GM12878 (cell line): ENCODE measurements at regions of chr3 and their contacts with region 1.

Region 1: GRCh38 chr3:14780927-14781507 is 37.7 kb upstream of the FGD5 start:
- DNase-seq: peak; percentile 31
- ATAC-seq: peak; percentile 100
- H3K4me3 ChIP-seq: no peak overlapping the region
- H3K27ac ChIP-seq: no peak overlapping the region
- H3K4me1 ChIP-seq: no peaks in the 10 kb centered on the region
- H3K27me3 ChIP-seq: no peaks in the 10 kb centered on the region; a peak in 1 of 4 replicates
- CTCF ChIP-seq: peak; percentile 80 to 93 (median 87)
- EP300 ChIP-seq: no peak
- POLR2A ChIP-seq: no peak
- RAD21 ChIP-seq: peak; percentile 99

Region 2: DNA sequence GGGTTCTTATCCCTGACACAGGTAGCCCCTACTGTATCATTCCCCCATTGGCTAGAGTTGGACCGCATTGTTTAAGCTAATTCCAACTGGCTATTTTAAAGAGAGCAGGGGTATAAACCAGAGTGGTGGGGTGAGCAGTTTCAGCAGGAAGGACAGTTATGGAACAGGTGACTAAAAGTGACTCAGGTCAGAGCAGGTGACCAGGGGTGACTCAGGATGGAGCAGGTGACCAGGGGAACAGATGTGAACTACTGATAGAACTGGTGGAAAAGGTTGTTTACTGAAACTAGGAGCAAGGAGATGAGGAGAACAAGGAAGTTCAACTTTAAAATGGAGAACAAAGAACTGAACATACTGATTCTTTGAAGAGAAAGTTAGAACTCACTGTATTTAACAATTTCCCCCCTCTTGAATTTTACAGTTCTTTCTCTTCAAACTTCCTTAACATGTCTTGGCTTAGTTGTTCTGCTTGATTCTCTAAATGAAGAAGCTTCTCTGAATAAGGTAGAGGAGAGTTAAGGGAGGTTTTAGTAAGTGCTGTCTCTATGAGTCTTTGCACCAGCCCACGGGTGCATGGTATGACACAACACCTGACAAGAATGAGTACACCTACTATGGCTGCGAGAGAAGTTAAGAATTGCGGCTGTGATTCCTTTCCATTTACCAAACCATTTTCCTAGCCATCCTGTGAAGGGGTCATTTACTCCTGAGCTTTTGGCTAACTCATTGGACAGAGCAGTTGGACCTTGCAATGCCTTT is 817.7 kb before region 1 on chr3:
- CTCF ChIA-PET with region 1: no interaction called
- POLR2A ChIA-PET with region 1: no interaction called
- RAD21 ChIA-PET with region 1: no interaction called
- SMC1A ChIA-PET with region 1: no interaction called
- in situ Hi-C with region 1: no loop called
- intact Hi-C with region 1: no loop called
- DNase-seq: no peak
- ATAC-seq: no peak
- H3K4me3 ChIP-seq: no peak overlapping the region
- H3K27ac ChIP-seq: no peak overlapping the region
- H3K4me1 ChIP-seq: no peaks in the 10 kb centered on the region
- H3K27me3 ChIP-seq: no peaks in the 10 kb centered on the region
- CTCF ChIP-seq: no peak
- EP300 ChIP-seq: no peak
- POLR2A ChIP-seq: no peak
- RAD21 ChIP-seq: no peak

Region 3: DNA sequence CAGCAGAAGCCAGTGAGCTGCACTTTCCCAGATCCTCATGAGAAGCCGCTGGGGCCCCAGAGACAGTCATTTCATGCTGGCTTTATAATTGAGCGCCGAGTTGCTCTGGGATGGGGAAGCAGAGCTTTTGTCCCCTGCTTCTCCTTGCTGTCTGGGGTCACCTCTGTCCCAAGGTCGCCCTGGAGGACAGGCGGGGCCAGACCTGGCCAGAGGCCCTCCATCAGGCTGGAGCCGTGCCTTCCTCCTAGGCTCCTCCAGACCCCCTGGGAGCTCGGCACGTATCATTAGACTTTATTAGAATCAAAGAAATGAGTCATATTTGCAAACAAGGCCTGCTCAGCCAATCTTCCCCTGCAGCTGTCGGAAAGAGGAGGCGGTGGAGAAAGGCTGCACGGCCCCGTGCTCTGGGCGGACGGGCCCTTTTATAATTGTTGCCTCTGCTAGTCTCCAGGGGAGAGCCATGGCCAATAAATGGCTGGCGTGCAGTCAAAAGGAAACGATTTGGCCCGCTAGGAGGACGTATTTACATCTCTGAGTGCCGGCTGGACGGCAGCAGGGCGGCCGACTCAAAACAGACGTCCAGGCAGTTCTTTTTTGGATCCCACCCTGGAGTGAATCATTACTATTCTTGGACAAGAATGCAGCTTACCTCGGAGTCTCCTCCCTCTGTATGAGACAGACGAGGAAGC is 328.2 kb before region 1 on chr3:
- CTCF ChIA-PET with region 1: no interaction called
- POLR2A ChIA-PET with region 1: no interaction called
- RAD21 ChIA-PET with region 1: no interaction called
- SMC1A ChIA-PET with region 1: no interaction called
- in situ Hi-C with region 1: no loop called
- intact Hi-C with region 1: no loop called
- DNase-seq: no peak
- ATAC-seq: no peak
- H3K4me3 ChIP-seq: no peak overlapping the region
- H3K27ac ChIP-seq: no peak overlapping the region
- H3K4me1 ChIP-seq: no peaks in the 10 kb centered on the region
- H3K27me3 ChIP-seq: no peaks in the 10 kb centered on the region
- CTCF ChIP-seq: no peak
- EP300 ChIP-seq: no peak
- POLR2A ChIP-seq: no peak
- RAD21 ChIP-seq: no peak

Region 4: GRCh38 chr3:14472471-14473351 is 308.3 kb before region 1 on chr3:
- CTCF ChIA-PET with region 1: no interaction called
- POLR2A ChIA-PET with region 1: no interaction called
- RAD21 ChIA-PET with region 1: no interaction called
- SMC1A ChIA-PET with region 1: no interaction called
- in situ Hi-C with region 1: no loop called
- intact Hi-C with region 1: no loop called
- DNase-seq: no peak
- ATAC-seq: no peak
- H3K4me3 ChIP-seq: no peak overlapping the region
- H3K27ac ChIP-seq: no peak overlapping the region
- H3K4me1 ChIP-seq: no peaks in the 10 kb centered on the region
- H3K27me3 ChIP-seq: no peaks in the 10 kb centered on the region
- CTCF ChIP-seq: no peak
- EP300 ChIP-seq: no peak
- POLR2A ChIP-seq: no peak
- RAD21 ChIP-seq: no peak

Region 5: GRCh38 chr3:14508961-14509795 is 271.8 kb before region 1 on chr3:
- CTCF ChIA-PET with region 1: interaction called, 23 read pairs
- POLR2A ChIA-PET with region 1: no interaction called
- RAD21 ChIA-PET with region 1: interaction called, 9 read pairs
- SMC1A ChIA-PET with region 1: interaction called, 9 read pairs
- in situ Hi-C with region 1: no loop called
- intact Hi-C with region 1: loop called (anchors 2 kb)
- DNase-seq: no peak
- ATAC-seq: peak; percentile 93
- H3K4me3 ChIP-seq: no peak overlapping the region
- H3K27ac ChIP-seq: no peak overlapping the region
- H3K4me1 ChIP-seq: no peaks in the 10 kb centered on the region
- H3K27me3 ChIP-seq: no peaks in the 10 kb centered on the region; a peak in 1 of 4 replicates
- CTCF ChIP-seq: peak; percentile 71 to 88 (median 73)
- EP300 ChIP-seq: no peak
- POLR2A ChIP-seq: no peak
- RAD21 ChIP-seq: peak; percentile 54

Region 6: DNA sequence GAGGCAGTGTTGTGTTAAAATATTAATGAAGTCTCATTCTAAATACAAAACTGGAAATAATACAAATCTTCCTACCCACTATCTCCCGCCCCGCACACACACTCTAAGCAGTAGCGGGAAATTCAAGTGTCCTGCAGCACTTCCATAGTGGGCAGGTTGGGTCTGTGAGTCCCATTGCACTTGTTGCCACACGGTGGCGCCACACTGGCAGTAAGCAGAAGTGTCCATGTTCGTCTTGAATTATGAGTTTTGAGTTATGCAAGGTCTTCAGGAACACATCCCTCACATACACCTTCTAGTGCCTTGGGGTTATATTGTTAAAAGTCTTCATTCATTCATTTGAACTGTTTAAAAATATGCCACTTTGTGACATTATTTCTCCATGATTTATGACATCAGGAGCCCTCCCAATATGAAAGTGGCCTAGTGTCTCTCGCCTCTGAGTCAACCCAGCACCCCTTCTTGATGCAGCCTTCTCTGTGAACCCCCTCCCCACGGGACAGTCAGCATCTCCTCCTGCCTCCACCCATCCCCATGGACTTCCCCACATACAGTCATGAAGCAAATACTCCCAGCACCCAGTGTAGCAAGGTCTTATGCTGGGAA is 147.1 kb before region 1 on chr3:
- CTCF ChIA-PET with region 1: interaction called, 120 read pairs
- POLR2A ChIA-PET with region 1: interaction called, 4 read pairs
- RAD21 ChIA-PET with region 1: interaction called, 23 read pairs
- SMC1A ChIA-PET with region 1: interaction called, 47 read pairs
- in situ Hi-C with region 1: no loop called
- intact Hi-C with region 1: loop called (anchors 1 kb)
- DNase-seq: peak; percentile 17
- ATAC-seq: peak; percentile 98
- H3K4me3 ChIP-seq: no peak overlapping the region
- H3K27ac ChIP-seq: no peak overlapping the region
- H3K4me1 ChIP-seq: no peaks in the 10 kb centered on the region
- H3K27me3 ChIP-seq: peaks cover under 1 to 6% of the 10 kb centered on the region in 2 experiments; a peak in 3 of 4 replicates
- CTCF ChIP-seq: peak; percentile 70 to 92 (median 85)
- EP300 ChIP-seq: no peak
- POLR2A ChIP-seq: no peak
- RAD21 ChIP-seq: peak; percentile 64

Region 7: DNA sequence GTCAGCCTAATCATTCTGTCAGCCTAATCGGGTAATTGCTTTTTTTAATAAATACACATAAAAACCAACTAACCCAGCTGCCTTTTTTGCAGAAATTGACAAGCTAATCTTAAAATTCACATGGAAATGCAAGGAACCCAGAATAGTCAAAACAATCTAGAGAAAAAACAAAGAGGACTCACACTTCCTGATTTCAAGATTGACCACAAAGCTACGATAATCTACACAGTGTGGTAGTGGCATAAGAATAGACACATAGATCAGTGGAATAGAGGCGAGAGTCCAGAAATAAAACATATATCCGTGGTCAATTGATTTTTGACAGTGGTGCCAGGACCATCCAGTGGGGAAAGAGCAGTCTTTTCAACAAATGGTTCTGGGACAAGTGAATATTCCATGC is 108.4 kb before region 1 on chr3:
- CTCF ChIA-PET with region 1: interaction called, 321 read pairs
- POLR2A ChIA-PET with region 1: interaction called, 4 read pairs
- RAD21 ChIA-PET with region 1: interaction called, 197 read pairs
- SMC1A ChIA-PET with region 1: interaction called, 274 read pairs
- in situ Hi-C with region 1: loop called (anchors 5 kb)
- intact Hi-C with region 1: loop called (anchors 1 kb)
- DNase-seq: no peak
- ATAC-seq: peak; percentile 71
- H3K4me3 ChIP-seq: no peak overlapping the region
- H3K27ac ChIP-seq: no peak overlapping the region
- H3K4me1 ChIP-seq: peaks cover 16% of the 10 kb centered on the region
- H3K27me3 ChIP-seq: no peaks in the 10 kb centered on the region
- CTCF ChIP-seq: no peak
- EP300 ChIP-seq: no peak
- POLR2A ChIP-seq: no peak
- RAD21 ChIP-seq: no peak

Region 8: GRCh38 chr3:14699643-14700042 is 81.4 kb before region 1 on chr3:
- CTCF ChIA-PET with region 1: interaction called, 13 read pairs
- POLR2A ChIA-PET with region 1: no interaction called
- RAD21 ChIA-PET with region 1: interaction called, 12 read pairs
- SMC1A ChIA-PET with region 1: interaction called, 20 read pairs
- in situ Hi-C with region 1: no loop called
- intact Hi-C with region 1: no loop called
- DNase-seq: no peak
- ATAC-seq: no peak; the same call in 2 of the 3 replicates
- H3K4me3 ChIP-seq: no peak overlapping the region
- H3K27ac ChIP-seq: no peak overlapping the region
- H3K4me1 ChIP-seq: peaks cover 6% of the 10 kb centered on the region; the same call in 1 of the 2 replicates
- H3K27me3 ChIP-seq: no peaks in the 10 kb centered on the region
- CTCF ChIP-seq: no peak
- EP300 ChIP-seq: no peak
- POLR2A ChIP-seq: no peak
- RAD21 ChIP-seq: no peak

Region 9: GRCh38 chr3:14761118-14761672 is 19.8 kb before region 1 on chr3:
- CTCF ChIA-PET with region 1: interaction called, 6 read pairs
- POLR2A ChIA-PET with region 1: no interaction called
- RAD21 ChIA-PET with region 1: no interaction called
- SMC1A ChIA-PET with region 1: interaction called, 15 read pairs
- in situ Hi-C with region 1: no loop called
- intact Hi-C with region 1: no loop called
- DNase-seq: no peak
- ATAC-seq: peak; percentile 50; the same call in 2 of the 3 replicates
- H3K4me3 ChIP-seq: no peak overlapping the region
- H3K27ac ChIP-seq: no peak overlapping the region
- H3K4me1 ChIP-seq: no peaks in the 10 kb centered on the region
- H3K27me3 ChIP-seq: no peaks in the 10 kb centered on the region
- CTCF ChIP-seq: no peak
- EP300 ChIP-seq: no peak
- POLR2A ChIP-seq: no peak
- RAD21 ChIP-seq: no peak